Posterior cingulate gyrus (tissue), 11 donors: ENCODE measurements at regions of chr19 and their contacts with region 1.

Region 1: DNA sequence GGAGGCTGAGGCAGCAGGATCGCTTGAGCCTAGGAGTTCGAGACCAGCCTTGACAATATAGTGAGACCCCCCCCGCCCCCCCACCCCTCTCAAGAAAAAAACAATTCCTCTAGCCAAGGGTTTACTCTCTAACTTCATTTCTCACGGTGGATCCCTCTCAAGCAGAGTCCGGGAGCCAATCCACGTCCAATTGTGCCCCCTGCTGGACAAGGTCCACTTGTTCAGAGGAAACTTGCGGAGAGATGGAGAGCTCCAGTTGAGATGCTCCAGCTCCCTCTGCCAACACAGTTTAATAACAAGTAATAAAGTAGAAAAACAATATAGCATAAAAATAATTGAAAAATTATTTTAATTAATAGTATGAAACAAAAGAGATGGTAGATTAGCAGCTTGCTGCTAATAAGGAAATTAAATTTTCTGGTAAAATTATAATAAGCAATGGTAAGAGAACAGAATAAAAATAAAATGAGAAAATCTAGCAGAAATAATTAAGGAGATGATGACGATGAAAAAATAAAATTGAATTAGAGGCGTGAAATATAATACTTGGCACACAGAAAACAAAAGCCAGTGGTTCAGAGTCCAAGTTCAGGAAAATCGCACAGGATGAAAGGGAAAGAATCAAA is 14.5 kb upstream of the SIGLEC14 start:
- DNase-seq: peak; percentile 50 to 96 (median 85)

Region 2: DNA sequence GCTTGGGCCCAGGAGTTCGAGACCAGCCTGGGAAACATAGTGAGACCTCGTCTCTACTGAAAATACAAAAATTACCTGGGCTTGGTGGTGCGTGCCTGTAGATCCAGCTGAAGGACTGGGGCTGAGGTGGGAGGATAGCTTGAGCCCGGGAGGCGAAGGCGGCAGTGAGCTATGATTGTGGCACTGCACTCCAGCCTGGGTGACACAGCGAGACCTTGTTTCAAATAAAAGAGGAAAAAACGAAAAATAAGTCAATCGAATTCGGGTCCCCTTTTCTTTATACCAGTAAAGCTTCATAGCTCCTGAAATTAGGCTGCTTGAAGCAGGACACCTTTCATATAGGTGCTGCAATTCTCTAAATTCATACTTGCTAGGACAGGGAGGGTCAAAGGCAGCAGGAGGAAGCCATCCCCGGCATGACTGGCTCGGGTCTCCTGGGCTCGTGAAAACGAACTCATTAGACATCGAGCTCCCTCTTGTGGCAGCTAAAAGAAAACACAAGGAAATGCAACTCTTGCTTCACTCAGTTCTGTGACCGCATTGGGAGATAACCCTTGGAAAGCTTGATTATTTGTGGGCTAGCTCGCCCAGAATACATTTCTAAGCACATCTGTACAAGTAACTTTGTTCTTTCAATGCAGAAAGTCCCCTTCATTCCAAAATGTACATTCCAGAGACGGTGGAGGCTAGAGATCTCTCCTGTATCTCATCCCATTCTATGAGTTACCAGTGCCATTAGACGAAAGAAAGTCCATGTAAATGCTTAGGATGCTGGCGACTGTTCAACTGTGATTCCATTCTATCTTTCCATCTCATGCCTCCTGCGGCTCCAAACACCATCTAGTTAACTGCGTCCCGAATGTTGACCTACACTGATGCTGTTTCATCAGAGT is 116.7 kb after region 1 on chr19:
- intact Hi-C with region 1: loop called (anchors 2 kb)
- DNase-seq: peak in 8 of 10 donors; percentile 32 to 91 (median 56)